ENCODE measurements at regions of chr17 and their contacts with region 1.

Region 1: DNA sequence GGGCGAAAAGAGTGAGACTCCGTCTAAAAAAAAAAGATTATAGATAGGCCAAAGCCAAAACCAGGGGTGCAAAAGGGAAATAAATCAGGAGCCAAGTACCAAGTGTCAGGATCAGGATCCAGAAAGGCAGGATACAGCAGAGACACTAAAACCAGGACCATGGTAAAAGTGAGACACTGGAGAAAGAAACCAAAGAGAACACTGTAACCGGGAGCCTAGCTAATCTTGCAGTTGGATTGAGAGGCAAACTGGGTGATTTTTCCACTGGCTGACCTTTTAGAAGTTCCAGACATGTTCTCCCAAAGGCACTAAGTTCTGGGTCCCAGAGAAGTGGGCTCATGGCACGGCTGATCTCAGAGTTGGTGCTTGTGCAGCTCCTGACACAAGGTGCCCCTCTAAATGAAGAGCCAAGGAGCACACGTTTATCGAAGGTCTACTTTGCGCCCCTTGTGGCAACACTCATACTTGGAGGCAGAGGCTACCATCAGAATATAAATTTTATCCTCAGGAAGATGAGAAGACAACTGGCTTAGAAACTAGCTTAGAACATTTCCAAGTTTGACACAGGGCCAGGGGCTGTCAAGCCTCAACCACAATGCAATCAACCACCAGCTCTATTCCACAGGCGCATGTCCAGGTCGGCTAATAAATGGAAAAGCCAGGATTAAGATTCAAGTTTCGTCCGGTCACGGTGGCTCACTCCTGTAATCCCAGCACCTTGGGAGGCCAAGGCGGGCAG is 27.5 kb upstream of the HELZ start:
- DNase-seq: no peak
- H3K4me3 ChIP-seq: no peak overlapping the region
- H3K27ac ChIP-seq: no peak overlapping the region
- H3K4me1 ChIP-seq: no peaks in the 10 kb centered on the region
- H3K27me3 ChIP-seq: no peaks in the 10 kb centered on the region
- CTCF ChIP-seq: peak; percentile 44; the same call in 1 of the 2 replicates

Region 2: DNA sequence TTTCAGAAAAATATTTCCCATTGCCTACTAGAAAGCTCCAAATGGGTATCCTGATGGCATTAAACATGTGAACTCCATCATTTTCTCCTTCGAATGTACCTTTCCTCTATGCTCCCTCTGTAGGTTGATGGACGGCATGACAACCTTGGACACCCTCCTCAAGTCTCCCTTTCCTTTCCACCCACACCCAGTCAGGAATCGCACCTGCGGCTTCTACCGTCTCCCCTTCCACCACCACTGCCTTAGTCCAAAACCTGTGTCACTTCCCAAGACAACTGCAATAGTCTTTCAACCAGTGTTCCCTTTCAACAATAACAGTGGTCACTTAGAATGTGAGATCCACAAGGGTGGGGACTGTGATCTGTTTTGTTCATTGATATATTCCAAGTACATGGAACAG is 1477.9 kb before region 1 on chr17:
- CTCF ChIA-PET with region 1: no interaction called
- POLR2A ChIA-PET with region 1: no interaction called
- intact Hi-C with region 1: no loop called
- DNase-seq: no peak
- H3K4me3 ChIP-seq: no peak overlapping the region
- H3K27ac ChIP-seq: no peak overlapping the region
- H3K4me1 ChIP-seq: no peaks in the 10 kb centered on the region
- H3K27me3 ChIP-seq: no peaks in the 10 kb centered on the region
- CTCF ChIP-seq: peak; percentile 63

Region 3: GRCh38 chr17:67411397-67411796 is 138.9 kb after region 1 on chr17:
- CTCF ChIA-PET with region 1: interaction called, 13 read pairs
- POLR2A ChIA-PET with region 1: no interaction called
- intact Hi-C with region 1: no loop called
- DNase-seq: no peak
- H3K4me3 ChIP-seq: no peak overlapping the region
- H3K27ac ChIP-seq: no peak overlapping the region
- H3K4me1 ChIP-seq: no peaks in the 10 kb centered on the region
- H3K27me3 ChIP-seq: no peaks in the 10 kb centered on the region
- CTCF ChIP-seq: no peak

Measured in PC-9 (cell line).